BJ (cell line): ENCODE measurements at regions of chr1 and their contacts with region 1.

Region 1: GRCh38 chr1:205284343-205285144 is 37.0 kb downstream of the NUAK2 start:
- DNase-seq: peak; percentile 92
- H3K4me3 ChIP-seq: no peak overlapping the region
- H3K27me3 ChIP-seq: no peaks in the 10 kb centered on the region
- CTCF ChIP-seq: peak; percentile 44

Region 2: GRCh38 chr1:205300886-205301821 is 16.6 kb after region 1 on chr1:
- CTCF ChIA-PET with region 1: interaction called, 13 read pairs
- POLR2A ChIA-PET with region 1: interaction called, 4 read pairs
- DNase-seq: peak; percentile 82
- H3K4me3 ChIP-seq: no peak overlapping the region
- H3K27me3 ChIP-seq: no peaks in the 10 kb centered on the region
- CTCF ChIP-seq: no peak